Panc1 (cell line): ENCODE measurements at regions of chr10 and their contacts with region 1.

Region 1: GRCh38 chr10:2938869-2939268 is 128.5 kb upstream of the PFKP start:
- DNase-seq: no peak
- ATAC-seq: no peak
- H3K4me3 ChIP-seq: no peak overlapping the region
- H3K27ac ChIP-seq: no peak overlapping the region
- H3K4me1 ChIP-seq: no peaks in the 10 kb centered on the region
- H3K27me3 ChIP-seq: peaks cover 11% of the 10 kb centered on the region
- CTCF ChIP-seq: peak; percentile 21; the same call in 1 of the 2 replicates

Region 2: DNA sequence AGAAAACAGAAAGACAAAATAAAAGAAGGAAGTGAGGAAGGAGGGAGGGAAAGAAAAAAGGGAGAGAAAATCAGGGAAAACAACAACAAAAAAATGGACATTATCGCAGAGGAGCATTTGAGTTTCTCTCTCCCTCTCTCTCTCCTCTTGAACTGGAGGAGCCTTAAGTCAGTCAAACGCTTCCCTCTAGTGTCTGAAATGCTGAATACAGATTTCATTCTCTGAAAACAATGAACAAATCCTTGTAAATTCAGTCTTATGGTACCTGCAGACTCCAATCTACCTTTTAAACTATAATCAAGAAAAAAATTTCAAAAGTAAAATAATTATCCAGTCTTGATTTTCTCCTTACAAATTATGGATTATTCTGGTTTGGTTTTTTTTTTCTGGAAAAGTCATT is 39.2 kb after region 1 on chr10:
- CTCF ChIA-PET with region 1: no interaction called
- POLR2A ChIA-PET with region 1: no interaction called
- in situ Hi-C with region 1: no loop called
- intact Hi-C with region 1: loop called (anchors 5 kb)
- DNase-seq: peak; percentile 64
- ATAC-seq: peak; percentile 75
- H3K4me3 ChIP-seq: no peak overlapping the region
- H3K27ac ChIP-seq: no peak overlapping the region
- H3K4me1 ChIP-seq: no peaks in the 10 kb centered on the region
- H3K27me3 ChIP-seq: no peaks in the 10 kb centered on the region
- CTCF ChIP-seq: peak; percentile 55; the same call in 1 of the 2 replicates

Region 3: DNA sequence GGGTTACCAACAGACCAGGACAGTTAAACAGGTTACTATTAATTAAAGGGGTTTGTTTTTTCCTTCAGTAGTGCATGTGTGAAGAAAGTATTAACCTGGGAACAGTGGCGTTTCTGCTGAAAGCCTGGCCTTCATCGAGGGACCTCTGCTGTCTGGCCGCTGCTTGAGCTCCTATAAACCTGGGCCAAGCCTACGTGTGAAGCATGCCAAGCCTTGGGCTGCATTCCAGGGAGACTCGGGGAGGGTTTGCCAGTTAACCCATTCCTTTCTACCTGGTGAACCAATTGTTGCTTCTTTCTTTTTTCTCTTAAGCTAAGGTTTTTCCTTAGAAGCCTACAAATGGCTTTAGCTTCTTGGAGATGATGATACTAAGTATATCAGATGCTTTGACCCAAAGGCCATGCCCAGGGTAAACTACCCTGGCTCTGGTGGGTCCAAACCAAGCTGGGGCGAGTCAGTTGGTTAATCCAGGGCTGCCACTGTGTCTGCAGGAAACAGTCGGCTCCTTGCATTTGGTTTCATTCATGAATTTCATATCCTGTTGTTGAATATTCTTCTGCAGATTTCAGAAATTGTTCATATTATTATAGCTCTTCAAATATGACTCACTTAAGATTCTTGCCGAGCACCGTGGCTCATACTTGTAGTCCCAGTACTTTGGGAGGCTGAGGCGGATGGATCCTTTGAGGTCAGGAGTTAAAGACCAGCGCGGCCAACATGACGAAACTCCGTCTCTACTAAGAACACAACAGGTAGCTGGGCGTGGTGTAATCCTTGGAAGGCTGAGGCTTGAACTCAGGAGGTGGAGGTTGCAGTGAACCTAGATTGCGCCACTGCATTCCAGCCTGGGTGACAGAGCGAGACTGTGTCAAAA is 152.3 kb after region 1 on chr10:
- CTCF ChIA-PET with region 1: no interaction called
- POLR2A ChIA-PET with region 1: no interaction called
- in situ Hi-C with region 1: no loop called
- intact Hi-C with region 1: no loop called
- DNase-seq: no peak
- ATAC-seq: peak; percentile 54
- H3K4me3 ChIP-seq: peak overlapping the region in 1 of 2 experiments; percentile 41; a peak in 2 of 4 replicates
- H3K27ac ChIP-seq: peak overlapping the region; percentile 90
- H3K4me1 ChIP-seq: peaks cover 84% of the 10 kb centered on the region
- H3K27me3 ChIP-seq: no peaks in the 10 kb centered on the region
- CTCF ChIP-seq: no peak

Region 4: GRCh38 chr10:3239066-3239919 is 300.4 kb after region 1 on chr10:
- CTCF ChIA-PET with region 1: no interaction called
- POLR2A ChIA-PET with region 1: no interaction called
- in situ Hi-C with region 1: no loop called
- intact Hi-C with region 1: no loop called
- DNase-seq: peak; percentile 39
- ATAC-seq: peak; percentile 94
- H3K4me3 ChIP-seq: no peak overlapping the region
- H3K27ac ChIP-seq: peak overlapping the region; percentile 80; the same call in 1 of the 2 replicates
- H3K4me1 ChIP-seq: peaks cover 8% of the 10 kb centered on the region
- H3K27me3 ChIP-seq: no peaks in the 10 kb centered on the region
- CTCF ChIP-seq: peak; percentile 84